ENCODE measurements at regions of chr5 and their contacts with region 1.

Region 1: DNA sequence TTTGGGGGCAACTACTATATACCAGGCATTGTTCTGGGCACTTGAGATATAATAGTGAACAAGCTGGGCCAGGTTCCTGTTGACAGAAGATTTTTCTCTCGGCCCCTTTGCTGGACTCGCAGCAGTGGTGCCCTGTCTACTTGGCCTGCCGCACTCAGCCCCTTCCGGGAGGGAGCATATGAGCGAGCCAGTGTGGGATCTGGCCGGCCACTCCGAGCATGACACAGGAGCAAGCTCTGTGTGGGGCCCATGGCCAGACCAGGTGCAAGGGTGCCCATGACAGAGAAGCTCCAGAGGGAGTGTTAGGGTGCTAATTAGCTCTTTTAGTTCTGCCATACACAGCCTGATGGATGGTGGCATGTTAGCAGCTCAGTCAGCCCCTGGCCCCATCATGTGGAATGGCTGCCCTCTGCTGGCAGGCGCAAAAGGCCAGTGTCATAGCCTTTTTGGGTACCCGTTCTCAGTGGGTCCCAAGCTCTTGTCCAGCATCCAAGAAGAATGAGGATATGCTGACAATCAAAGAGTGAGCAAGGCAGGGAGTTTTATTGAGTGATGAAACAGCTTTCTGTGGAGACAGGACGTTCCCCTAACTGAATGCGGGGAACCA is 9.3 kb upstream of the KIF4B start:
- DNase-seq: peak; percentile 76
- H3K4me3 Mint-ChIP-seq: no peak overlapping the region
- H3K27ac Mint-ChIP-seq: no peak overlapping the region
- H3K4me1 Mint-ChIP-seq: peaks cover 16% of the 10 kb centered on the region
- H3K27me3 Mint-ChIP-seq: peaks cover 15% of the 10 kb centered on the region
- CTCF ChIP-seq: peak; percentile 78

Region 2: DNA sequence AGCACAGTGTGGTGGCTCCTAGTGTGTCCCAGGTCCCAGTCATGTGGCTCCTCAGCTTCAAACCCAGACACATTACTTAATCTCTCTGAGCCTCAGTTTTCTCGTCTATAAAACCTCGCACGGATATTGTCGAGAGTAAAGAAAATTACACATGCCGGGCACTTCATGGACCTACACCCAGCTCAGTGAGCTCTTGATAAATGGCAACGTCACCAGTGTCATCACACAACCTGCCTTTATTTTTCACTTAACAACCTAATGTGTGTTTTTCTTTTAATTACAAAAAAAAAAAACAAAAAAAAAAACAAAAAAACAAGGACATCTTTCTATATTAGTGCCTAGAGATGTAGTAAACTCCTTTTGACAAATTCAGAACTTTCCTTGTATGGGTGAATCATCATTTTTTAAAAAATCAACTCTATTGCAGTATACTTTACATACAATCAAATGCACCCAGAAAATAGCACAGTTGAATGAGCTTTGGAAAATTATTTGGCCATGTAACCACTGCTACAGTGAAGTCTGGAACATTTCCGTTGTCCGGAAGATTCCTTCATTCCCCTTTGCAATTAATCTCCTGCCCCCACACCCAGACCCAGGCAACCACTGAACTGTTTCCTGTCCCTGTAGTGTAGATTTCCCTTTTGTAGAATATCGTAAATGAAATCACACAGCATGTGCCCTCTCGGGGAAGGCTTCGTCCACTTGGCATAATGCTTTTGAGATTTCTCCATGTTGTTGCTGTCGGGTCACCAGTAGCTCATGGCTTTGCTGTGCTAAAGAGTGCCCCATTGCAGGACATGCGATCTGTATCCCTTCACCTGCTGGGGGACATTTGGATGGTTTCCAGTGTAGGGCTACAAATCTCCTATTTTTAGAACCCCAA is 349.5 kb before region 1 on chr5:
- CTCF ChIA-PET with region 1: no interaction called
- intact Hi-C with region 1: loop called (anchors 5 kb)
- DNase-seq: no peak
- H3K4me3 Mint-ChIP-seq: no peak overlapping the region
- H3K27ac Mint-ChIP-seq: no peak overlapping the region
- H3K4me1 Mint-ChIP-seq: peaks cover 5% of the 10 kb centered on the region
- H3K27me3 Mint-ChIP-seq: no peaks in the 10 kb centered on the region
- CTCF ChIP-seq: no peak

Region 3: GRCh38 chr5:154940772-154941620 is 63.2 kb before region 1 on chr5 and contains the start of gene MRPL22:
- CTCF ChIA-PET with region 1: interaction called, 4 read pairs
- intact Hi-C with region 1: loop called (anchors 1 kb)
- DNase-seq: peak; percentile 95
- H3K4me3 Mint-ChIP-seq: peak within 1 kb of the TSS; percentile 96
- H3K27ac Mint-ChIP-seq: peak within 1 kb of the TSS; percentile 94
- H3K4me1 Mint-ChIP-seq: peaks cover 8% of the 10 kb centered on the region
- H3K27me3 Mint-ChIP-seq: no peaks in the 10 kb centered on the region
- CTCF ChIP-seq: no peak
- total RNA-seq, gene MRPL22: 73.8 and 80.6 TPM in 2 replicates

Region 4: DNA sequence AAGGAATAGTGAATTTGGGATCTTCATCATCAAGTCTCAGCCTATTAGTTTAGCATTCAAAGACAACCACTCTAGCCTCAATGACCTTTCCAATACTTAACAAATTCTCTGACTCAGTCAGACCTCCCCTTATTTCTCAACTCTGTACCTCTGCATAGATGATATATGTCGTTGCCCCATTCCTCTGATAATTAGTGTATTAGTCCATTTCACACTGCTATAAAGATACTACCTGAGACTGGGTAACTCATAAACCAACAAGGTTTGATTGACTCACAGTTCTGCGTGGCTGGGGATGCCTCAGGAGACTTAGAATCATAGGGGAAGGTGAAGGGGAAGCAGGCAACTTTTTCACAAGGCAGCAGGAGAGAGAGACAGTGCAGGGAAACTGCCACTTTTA is 54.5 kb before region 1 on chr5:
- CTCF ChIA-PET with region 1: no interaction called
- intact Hi-C with region 1: loop called (anchors 1 kb)
- DNase-seq: no peak
- H3K4me3 Mint-ChIP-seq: no peak overlapping the region
- H3K27ac Mint-ChIP-seq: no peak overlapping the region
- H3K4me1 Mint-ChIP-seq: no peaks in the 10 kb centered on the region
- H3K27me3 Mint-ChIP-seq: no peaks in the 10 kb centered on the region
- CTCF ChIP-seq: no peak

Region 5: GRCh38 chr5:154967421-154968024 is 36.7 kb before region 1 on chr5:
- CTCF ChIA-PET with region 1: interaction called, 41 read pairs
- intact Hi-C with region 1: loop called (anchors 1 kb)
- DNase-seq: peak; percentile 39
- H3K4me3 Mint-ChIP-seq: no peak overlapping the region
- H3K27ac Mint-ChIP-seq: no peak overlapping the region
- H3K4me1 Mint-ChIP-seq: no peaks in the 10 kb centered on the region
- H3K27me3 Mint-ChIP-seq: no peaks in the 10 kb centered on the region
- CTCF ChIP-seq: peak; percentile 68

Region 6: GRCh38 chr5:154972476-154973080 is 31.7 kb before region 1 on chr5:
- CTCF ChIA-PET with region 1: interaction called, 41 read pairs
- intact Hi-C with region 1: loop called (anchors 1 kb)
- DNase-seq: peak; percentile 60
- H3K4me3 Mint-ChIP-seq: no peak overlapping the region
- H3K27ac Mint-ChIP-seq: no peak overlapping the region
- H3K4me1 Mint-ChIP-seq: no peaks in the 10 kb centered on the region
- H3K27me3 Mint-ChIP-seq: no peaks in the 10 kb centered on the region
- CTCF ChIP-seq: peak; percentile 50

Region 7: GRCh38 chr5:155406815-155407214 is 402.6 kb after region 1 on chr5:
- CTCF ChIA-PET with region 1: no interaction called
- intact Hi-C with region 1: no loop called
- DNase-seq: no peak
- H3K4me3 Mint-ChIP-seq: no peak overlapping the region
- H3K27ac Mint-ChIP-seq: no peak overlapping the region
- H3K4me1 Mint-ChIP-seq: no peaks in the 10 kb centered on the region
- H3K27me3 Mint-ChIP-seq: no peaks in the 10 kb centered on the region
- CTCF ChIP-seq: no peak

Measured in Calu3 (cell line).